Activated CD4-positive, alpha-beta T cell treated with anti-CD3 and anti-CD28 coated beads for 36 hours (primary cell): ENCODE measurements at regions of chr12 and their contacts with region 1.

Region 1: DNA sequence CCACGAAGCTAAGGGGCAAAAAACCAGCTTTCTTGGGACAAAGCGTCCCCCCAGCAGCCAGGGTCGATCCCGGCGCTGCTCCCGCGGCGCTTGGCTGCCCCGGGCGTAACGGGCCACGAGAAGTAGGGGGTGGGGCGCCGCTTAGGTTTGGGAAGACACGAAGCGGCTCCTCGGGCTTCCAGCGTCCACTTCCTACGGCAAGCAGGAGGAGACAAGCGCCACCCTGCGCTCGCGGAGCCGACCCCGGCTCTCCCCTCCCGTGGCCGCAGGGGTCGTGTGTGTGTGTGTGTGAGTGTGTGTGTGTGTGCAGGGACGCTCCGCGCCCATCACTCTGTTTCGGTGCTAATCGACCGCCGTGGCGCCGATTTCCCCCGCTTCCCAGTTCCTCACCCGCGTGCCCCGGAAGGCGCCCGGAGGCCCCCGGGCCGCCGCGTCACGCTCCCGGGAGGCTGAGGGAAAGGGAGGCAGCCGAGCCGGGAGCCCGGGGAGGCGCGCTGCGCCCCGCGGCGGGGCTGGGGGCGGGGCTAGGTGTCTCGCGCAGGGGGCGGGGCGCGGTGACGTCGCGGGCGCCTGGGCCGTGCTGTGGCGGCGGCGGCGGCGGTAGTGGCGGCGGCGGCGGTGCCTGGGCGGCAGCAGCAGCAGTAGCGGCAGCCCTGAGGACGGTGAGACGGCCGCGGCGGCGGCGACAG is at the start of gene ERC1:
- DNase-seq: peak; percentile 92
- ATAC-seq: peak; percentile 88
- H3K4me3 Mint-ChIP-seq: peak within 1 kb of the TSS; percentile 92
- H3K27ac Mint-ChIP-seq: peak within 1 kb of the TSS; percentile 95
- H3K4me1 Mint-ChIP-seq: peaks cover 44% of the 10 kb centered on the region
- H3K27me3 Mint-ChIP-seq: no peaks in the 10 kb centered on the region
- total RNA-seq, gene ERC1: 24.7 to 31.9 TPM

Region 2: DNA sequence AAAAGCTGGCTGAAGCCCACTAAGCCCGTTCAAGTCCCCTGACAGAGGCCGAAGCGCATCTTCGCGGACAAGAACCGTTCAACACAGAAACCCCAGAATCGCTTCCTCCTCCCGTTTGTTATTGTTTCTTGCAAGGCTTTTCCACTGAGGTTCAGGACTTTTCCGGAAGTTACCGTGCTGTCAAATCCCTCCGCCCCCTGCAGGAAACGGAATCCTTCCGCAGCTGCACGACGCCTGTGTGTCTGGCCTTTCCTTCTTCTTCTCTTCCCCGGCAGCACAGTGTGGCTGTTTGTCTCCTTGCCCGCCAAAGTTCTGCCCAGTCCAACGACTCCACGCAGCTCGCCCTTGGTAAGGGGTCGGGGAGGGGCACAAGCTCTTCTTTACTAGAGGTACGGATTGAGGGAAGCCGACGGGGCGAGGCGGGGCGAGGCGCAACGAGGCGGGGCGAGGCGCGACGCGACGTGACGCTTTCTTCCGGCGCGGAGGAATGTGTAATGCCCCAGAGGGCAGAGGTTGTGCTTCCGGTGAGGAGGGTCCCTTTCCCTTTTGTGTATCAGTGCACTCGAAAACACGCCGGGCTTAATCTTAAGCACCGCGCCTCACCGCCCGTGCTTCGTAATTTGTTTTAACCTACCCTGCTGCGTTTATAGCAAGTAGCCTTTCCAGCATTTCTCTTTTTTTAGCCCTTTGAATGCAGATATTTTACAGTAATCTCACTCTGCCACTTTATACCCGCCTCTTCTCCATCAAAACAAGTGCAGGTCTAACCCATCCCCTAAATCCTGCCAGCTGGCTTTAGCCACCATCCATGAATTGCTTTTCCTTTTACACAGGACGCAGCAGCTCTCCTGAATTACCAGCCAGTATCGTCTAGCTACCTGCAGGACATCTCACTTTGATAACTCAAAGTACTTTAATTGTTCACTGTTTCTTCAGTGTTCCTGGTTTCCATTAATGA is 601.4 kb before region 1 on chr12 and contains the start of gene KDM5A:
- CTCF ChIA-PET with region 1: no interaction called
- POLR2A ChIA-PET with region 1: no interaction called
- intact Hi-C with region 1: loop called in 1 of 2 experiments (anchors 1 kb)
- DNase-seq: peak; percentile 94
- ATAC-seq: peak; percentile 94
- H3K4me3 Mint-ChIP-seq: peak within 1 kb of the TSS; percentile 89
- H3K27ac Mint-ChIP-seq: peak within 1 kb of the TSS; percentile 96
- H3K4me1 Mint-ChIP-seq: peaks cover 26% of the 10 kb centered on the region
- H3K27me3 Mint-ChIP-seq: no peaks in the 10 kb centered on the region
- total RNA-seq, gene KDM5A: 40.3 to 58.7 TPM

Region 3: DNA sequence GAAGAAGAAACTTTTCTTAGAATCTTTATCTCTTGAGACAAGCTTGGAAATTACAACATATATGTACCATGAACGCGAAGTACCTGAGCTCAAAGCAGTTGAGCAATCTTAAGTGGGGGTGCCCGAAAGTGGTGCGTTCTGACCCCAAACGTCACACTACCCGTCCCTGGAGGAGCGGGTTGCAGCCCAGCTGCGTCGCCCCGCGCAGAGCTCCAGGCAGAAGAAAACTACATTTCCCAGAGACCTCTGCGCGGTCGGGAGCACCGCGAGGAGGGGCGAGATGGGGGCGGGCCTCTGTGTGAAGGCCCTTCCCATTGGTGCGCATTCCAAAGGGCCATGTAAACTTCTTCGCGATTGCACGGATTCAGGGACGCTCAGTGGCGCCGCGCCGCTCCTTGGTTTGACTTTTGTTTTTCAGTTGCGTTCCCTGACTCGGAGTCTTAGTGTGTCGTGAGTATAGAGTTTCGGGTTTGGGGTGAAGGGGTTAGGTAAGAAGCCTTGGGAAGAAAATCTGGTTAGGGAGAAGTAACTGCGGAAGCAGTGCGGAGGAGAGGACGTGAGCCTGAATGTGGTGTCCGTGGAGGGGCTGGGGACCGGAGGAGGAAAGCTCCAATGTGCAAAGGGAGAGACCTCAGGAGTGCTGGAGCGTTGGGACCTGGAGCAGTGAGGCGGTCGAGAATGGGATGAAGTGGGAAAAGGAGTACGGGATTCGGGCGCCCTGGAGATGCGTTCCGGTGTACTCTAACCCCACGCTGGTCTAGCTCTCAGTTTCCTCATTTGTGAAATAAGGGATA is 589.4 kb before region 1 on chr12 and contains the start of gene CCDC77:
- CTCF ChIA-PET with region 1: no interaction called
- POLR2A ChIA-PET with region 1: no interaction called
- intact Hi-C with region 1: loop called in 1 of 2 experiments (anchors 2 kb)
- DNase-seq: peak; percentile 96
- ATAC-seq: peak; percentile 100
- H3K4me3 Mint-ChIP-seq: no peak within 1 kb of the TSS
- H3K27ac Mint-ChIP-seq: no peak within 1 kb of the TSS
- H3K4me1 Mint-ChIP-seq: peaks cover 5% of the 10 kb centered on the region
- H3K27me3 Mint-ChIP-seq: no peaks in the 10 kb centered on the region
- total RNA-seq, gene CCDC77: 17.3 to 18.7 TPM

Region 4: GRCh38 chr12:1093166-1093751 is 102.5 kb after region 1 on chr12:
- CTCF ChIA-PET with region 1: interaction called, 4 read pairs
- POLR2A ChIA-PET with region 1: no interaction called
- intact Hi-C with region 1: loop called (anchors 5 to 10 kb)
- DNase-seq: peak; percentile 46
- ATAC-seq: peak; percentile 71
- H3K4me3 Mint-ChIP-seq: no peak overlapping the region
- H3K27ac Mint-ChIP-seq: no peak overlapping the region
- H3K4me1 Mint-ChIP-seq: peaks cover 27% of the 10 kb centered on the region
- H3K27me3 Mint-ChIP-seq: no peaks in the 10 kb centered on the region

Region 5: GRCh38 chr12:1204581-1205121 is 213.8 kb after region 1 on chr12:
- CTCF ChIA-PET with region 1: no interaction called
- POLR2A ChIA-PET with region 1: no interaction called
- intact Hi-C with region 1: loop called in 1 of 2 experiments (anchors 5 kb)
- DNase-seq: no peak
- ATAC-seq: peak; percentile 93
- H3K4me3 Mint-ChIP-seq: no peak overlapping the region
- H3K27ac Mint-ChIP-seq: no peak overlapping the region
- H3K4me1 Mint-ChIP-seq: peaks cover 18% of the 10 kb centered on the region
- H3K27me3 Mint-ChIP-seq: no peaks in the 10 kb centered on the region